ENCODE measurements at regions of chr2 and their contacts with region 1.

Region 1: DNA sequence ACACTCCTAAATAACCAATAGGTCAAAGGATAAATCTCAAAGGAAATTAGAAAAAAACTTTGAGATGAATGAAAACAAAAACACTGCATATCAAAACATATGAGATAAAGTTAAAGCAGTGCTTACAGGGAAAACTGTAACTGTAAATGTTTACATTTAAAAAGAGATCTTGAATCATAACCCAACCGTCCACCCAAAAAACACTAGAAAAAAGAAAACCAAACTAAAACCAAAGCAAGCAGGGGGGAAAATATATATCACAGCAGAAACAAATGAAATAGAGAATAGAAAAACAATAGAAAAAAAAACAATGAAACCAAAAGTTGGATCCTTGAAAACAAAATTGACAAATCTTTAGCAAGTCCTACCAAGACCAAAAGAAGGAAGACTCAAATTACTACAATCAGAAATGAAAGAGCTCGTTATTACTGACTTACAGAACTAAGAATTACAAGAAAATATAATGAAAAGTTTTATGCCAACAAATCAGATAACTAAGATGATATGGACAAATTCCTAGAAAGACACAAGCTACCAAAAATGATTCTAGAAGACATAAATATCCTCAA is 65.6 kb downstream of the TLK1 start:
- DNase-seq: no peak
- H3K4me3 Mint-ChIP-seq: no peak overlapping the region
- H3K27ac Mint-ChIP-seq: no peak overlapping the region
- H3K4me1 Mint-ChIP-seq: peaks cover 28% of the 10 kb centered on the region
- H3K27me3 Mint-ChIP-seq: no peaks in the 10 kb centered on the region

Region 2: GRCh38 chr2:171136024-171136423 is 40.9 kb after region 1 on chr2:
- CTCF ChIA-PET with region 1: interaction called, 4 read pairs
- intact Hi-C with region 1: loop called (anchors 2 kb)
- DNase-seq: peak; percentile 34
- H3K4me3 Mint-ChIP-seq: no peak overlapping the region
- H3K27ac Mint-ChIP-seq: peak overlapping the region; percentile 47
- H3K4me1 Mint-ChIP-seq: peaks cover 68% of the 10 kb centered on the region
- H3K27me3 Mint-ChIP-seq: no peaks in the 10 kb centered on the region

Measured in activated naive CD4-positive, alpha-beta T cell treated with anti-CD3 and anti-CD28 coated beads for 36 hours (primary cell).